Calu3 (cell line): ENCODE measurements at regions of chrX and their contacts with region 1.

Region 1: DNA sequence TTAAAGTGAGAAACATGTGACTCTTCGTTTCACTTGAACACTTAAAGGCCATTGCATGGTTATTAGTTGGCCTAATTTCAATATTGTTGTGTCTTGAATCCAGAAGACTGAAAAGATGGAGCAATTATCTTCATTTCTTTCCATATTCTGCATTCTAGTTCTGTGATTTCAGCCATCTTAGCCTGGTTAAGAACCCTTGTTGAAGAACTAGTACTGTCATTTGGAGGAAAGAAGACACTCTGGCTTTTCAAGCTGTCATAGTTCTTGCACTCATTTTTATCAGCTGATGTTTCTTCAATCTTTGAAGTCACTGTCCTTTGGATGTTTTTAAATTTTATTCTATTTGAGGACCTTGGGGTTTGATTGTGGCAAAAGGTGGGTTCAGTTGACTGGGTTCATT is 81.6 kb downstream of the MTMR8 start:
- DNase-seq: no peak
- H3K4me3 Mint-ChIP-seq: no peak overlapping the region
- H3K27ac Mint-ChIP-seq: no peak overlapping the region
- H3K4me1 Mint-ChIP-seq: no peaks in the 10 kb centered on the region
- H3K27me3 Mint-ChIP-seq: no peaks in the 10 kb centered on the region
- CTCF ChIP-seq: no peak

Region 2: GRCh38 chrX:63702556-63702955 is 611.1 kb before region 1 on chrX:
- CTCF ChIA-PET with region 1: no interaction called
- intact Hi-C with region 1: loop called (anchors 5 kb)
- DNase-seq: no peak
- H3K4me3 Mint-ChIP-seq: no peak overlapping the region
- H3K27ac Mint-ChIP-seq: no peak overlapping the region
- H3K4me1 Mint-ChIP-seq: no peaks in the 10 kb centered on the region
- H3K27me3 Mint-ChIP-seq: no peaks in the 10 kb centered on the region
- CTCF ChIP-seq: no peak

Region 3: GRCh38 chrX:64642482-64642881 is 328.9 kb after region 1 on chrX:
- CTCF ChIA-PET with region 1: no interaction called
- intact Hi-C with region 1: no loop called
- DNase-seq: no peak
- H3K4me3 Mint-ChIP-seq: no peak overlapping the region
- H3K27ac Mint-ChIP-seq: no peak overlapping the region
- H3K4me1 Mint-ChIP-seq: no peaks in the 10 kb centered on the region
- H3K27me3 Mint-ChIP-seq: no peaks in the 10 kb centered on the region
- CTCF ChIP-seq: no peak